ENCODE measurements at regions of chr3 and their contacts with region 1.

Region 1: DNA sequence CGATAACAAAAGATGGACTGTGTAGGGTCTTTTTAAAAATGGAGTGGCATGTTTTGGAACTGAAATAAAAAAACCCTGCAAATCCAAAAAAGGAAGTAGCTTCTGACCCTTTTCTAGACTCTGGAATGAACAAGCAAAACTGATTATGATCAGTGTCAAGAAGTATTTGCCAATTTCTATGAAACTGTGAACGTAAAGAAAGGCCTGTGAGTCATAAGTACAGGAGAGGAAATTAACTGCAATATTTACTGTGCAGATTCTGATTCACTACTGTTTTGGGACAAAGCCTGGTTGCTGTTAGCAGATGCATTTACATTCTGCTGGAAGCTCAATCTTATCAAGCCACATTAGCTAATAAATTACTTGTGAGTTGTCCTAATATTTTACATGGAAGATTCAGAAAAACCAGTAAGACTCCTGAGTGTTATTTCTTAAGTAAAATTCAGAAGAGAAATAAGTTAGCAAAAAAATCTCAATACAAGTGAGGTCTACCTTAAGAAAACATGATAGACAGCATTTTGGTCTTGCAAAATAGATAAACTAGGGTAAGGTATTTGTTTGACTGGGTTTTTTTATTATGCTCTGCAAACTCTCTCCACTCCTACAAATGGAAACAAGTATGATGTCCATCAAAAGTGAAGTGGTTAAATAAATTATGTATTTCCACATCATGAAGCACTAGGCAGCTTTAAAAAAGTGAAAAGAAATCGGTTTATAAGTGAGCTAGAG is 90.2 kb upstream of the LMOD3 start:
- DNase-seq: no peak
- ATAC-seq: peak; percentile 93
- H3K4me3 Mint-ChIP-seq: peak overlapping the region; percentile 23
- H3K27ac Mint-ChIP-seq: peak overlapping the region; percentile 94
- H3K4me1 Mint-ChIP-seq: peaks cover 65% of the 10 kb centered on the region
- H3K27me3 Mint-ChIP-seq: no peaks in the 10 kb centered on the region

Region 2: DNA sequence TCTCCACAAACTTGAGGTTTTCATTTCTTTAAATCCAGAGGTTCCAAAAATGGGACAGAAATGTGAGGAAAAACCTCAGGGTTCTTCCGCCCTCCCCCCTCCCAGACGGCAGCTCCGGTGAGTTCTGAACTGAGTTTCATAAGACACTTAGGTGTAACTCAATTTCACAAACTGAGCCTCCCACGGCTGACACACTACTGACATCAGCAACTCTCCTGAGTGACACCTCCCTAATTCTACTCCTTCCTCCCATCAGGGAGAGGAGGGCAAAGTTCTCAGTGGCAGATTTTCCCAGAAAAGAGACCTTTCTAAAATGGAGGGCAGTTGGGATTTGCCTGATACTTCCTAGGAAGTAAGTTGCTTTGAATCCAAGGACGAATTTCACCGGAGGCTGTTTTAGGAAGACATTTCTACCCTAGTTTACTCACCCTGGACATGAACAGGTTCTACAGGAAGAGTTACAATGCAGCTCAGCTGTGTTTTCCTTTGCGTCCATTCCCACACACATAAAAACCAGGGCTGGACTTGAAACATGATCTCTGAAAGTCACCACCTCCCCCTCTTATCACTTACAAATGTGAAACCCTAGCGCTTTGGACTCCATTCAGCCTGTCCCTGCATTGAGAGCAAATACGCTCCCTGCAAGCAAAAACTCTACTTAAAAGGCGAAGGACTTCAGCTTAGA is 12.0 kb before region 1 on chr3:
- CTCF ChIA-PET with region 1: interaction called, 16 read pairs
- DNase-seq: peak; percentile 81
- ATAC-seq: peak; percentile 40
- H3K4me3 Mint-ChIP-seq: peak overlapping the region; percentile 98
- H3K27ac Mint-ChIP-seq: peak overlapping the region; percentile 96
- H3K4me1 Mint-ChIP-seq: peaks cover 75% of the 10 kb centered on the region
- H3K27me3 Mint-ChIP-seq: no peaks in the 10 kb centered on the region

Measured in activated CD8-positive, alpha-beta memory T cell treated with anti-CD3 and anti-CD28 coated beads, Interleukin-2, amount 10 ng/mL, durations not matched to agents 7 days and 5 days (primary cell).